ENCODE measurements at regions of chrX and their contacts with region 1.

Region 1: DNA sequence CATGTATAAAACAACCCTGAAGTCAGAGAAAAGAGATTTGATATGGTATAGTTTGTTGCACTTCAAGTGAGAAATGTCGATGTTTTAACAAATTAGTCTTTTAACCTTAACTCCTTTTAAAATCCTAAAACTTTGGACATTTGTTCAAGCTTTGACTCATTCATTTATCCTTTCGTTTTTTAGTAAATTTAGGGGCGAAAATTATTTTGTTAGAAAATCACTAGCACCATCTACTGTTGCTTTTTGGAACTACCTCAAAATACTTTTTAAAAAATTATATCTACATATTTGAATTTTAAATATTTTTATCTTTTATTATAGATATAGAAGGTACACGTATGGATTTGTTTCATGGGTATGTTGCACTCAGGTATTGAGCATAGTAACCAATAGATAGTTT is 165.1 kb upstream of the POF1B start:
- DNase-seq: no peak
- H3K4me3 ChIP-seq: no peak overlapping the region
- CTCF ChIP-seq: no peak
- POLR2A ChIP-seq: no peak

Region 2: DNA sequence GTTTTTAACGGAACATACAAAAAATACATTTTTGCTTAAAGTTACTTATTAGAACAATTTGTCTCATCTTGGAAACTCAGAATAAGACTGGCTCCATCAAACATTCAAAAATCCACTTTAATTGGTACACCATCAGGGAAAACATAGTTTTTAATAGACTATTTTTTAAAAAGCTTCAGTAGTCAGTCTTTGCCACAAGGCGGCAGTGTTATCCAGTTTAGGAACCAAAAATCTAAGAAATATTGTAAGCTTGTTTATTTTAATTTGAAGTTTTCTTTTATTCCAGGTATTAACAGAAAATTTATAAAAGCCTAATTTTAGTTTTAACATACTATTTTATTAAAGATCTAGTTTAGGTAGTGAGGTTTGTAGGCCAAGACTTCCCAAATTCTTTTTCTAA is 433.3 kb before region 1 on chrX:
- intact Hi-C with region 1: loop called (anchors 10 kb)
- DNase-seq: no peak
- H3K4me3 ChIP-seq: no peak overlapping the region
- CTCF ChIP-seq: no peak
- POLR2A ChIP-seq: no peak